ENCODE measurements at regions of chr3 and their contacts with region 1.

Region 1: GRCh38 chr3:97793420-97794019 is 28.3 kb upstream of the CRYBG3 start:
- DNase-seq: peak; percentile 42
- H3K4me3 ChIP-seq: no peak overlapping the region
- H3K27ac ChIP-seq: no peak overlapping the region
- H3K4me1 ChIP-seq: no peaks in the 10 kb centered on the region
- H3K27me3 ChIP-seq: no peaks in the 10 kb centered on the region
- CTCF ChIP-seq: peak; percentile 66 to 76

Region 2: DNA sequence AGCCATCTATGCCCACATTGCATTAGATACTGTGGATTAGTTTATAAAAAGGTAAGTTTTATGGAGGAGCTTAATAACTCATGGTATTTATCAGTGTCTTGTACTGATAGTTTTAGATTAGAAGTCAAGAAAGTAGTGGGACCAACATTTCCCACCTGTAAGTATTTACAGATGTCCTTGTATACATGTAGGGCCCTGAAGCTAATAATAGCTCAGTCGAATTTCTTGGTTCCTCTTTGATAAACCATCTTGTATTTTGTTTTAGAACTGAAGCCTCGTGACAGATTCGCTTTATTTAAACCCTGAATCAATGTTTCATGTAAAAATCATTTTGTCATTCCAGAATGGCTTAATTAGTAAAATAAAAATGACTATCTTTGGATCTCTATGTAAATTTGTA is 101.7 kb after region 1 on chr3:
- CTCF ChIA-PET with region 1: no interaction called
- dilution Hi-C with region 1: no loop called
- in situ Hi-C with region 1: no loop called
- intact Hi-C with region 1: loop called (anchors 1 kb)
- DNase-seq: no peak
- H3K4me3 ChIP-seq: no peak overlapping the region
- H3K27ac ChIP-seq: no peak overlapping the region
- H3K4me1 ChIP-seq: no peaks in the 10 kb centered on the region
- H3K27me3 ChIP-seq: no peaks in the 10 kb centered on the region
- CTCF ChIP-seq: no peak

Region 3: DNA sequence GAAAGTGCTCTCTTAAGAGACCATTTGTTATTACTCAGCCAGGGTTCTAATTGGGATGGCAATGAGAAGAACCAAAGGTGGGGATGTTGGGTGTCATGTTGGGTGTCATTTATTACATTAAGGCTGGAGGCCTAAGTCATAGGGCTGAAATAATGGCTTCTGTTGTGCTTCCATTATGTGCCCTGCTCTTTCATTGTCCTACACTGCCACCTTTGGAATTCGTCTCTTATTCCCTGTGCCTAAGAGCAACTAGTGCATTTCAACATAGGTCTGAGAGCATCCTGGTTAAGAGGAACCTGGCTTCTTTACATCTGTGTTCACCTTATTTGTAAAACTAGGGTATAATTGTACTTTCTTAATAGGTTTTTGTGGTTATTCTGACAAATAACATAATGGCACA is 146.5 kb after region 1 on chr3:
- CTCF ChIA-PET with region 1: no interaction called
- dilution Hi-C with region 1: no loop called
- in situ Hi-C with region 1: no loop called
- intact Hi-C with region 1: loop called (anchors 2 kb)
- DNase-seq: no peak
- H3K4me3 ChIP-seq: no peak overlapping the region
- H3K27ac ChIP-seq: no peak overlapping the region
- H3K4me1 ChIP-seq: no peaks in the 10 kb centered on the region
- H3K27me3 ChIP-seq: no peaks in the 10 kb centered on the region
- CTCF ChIP-seq: no peak

Region 4: DNA sequence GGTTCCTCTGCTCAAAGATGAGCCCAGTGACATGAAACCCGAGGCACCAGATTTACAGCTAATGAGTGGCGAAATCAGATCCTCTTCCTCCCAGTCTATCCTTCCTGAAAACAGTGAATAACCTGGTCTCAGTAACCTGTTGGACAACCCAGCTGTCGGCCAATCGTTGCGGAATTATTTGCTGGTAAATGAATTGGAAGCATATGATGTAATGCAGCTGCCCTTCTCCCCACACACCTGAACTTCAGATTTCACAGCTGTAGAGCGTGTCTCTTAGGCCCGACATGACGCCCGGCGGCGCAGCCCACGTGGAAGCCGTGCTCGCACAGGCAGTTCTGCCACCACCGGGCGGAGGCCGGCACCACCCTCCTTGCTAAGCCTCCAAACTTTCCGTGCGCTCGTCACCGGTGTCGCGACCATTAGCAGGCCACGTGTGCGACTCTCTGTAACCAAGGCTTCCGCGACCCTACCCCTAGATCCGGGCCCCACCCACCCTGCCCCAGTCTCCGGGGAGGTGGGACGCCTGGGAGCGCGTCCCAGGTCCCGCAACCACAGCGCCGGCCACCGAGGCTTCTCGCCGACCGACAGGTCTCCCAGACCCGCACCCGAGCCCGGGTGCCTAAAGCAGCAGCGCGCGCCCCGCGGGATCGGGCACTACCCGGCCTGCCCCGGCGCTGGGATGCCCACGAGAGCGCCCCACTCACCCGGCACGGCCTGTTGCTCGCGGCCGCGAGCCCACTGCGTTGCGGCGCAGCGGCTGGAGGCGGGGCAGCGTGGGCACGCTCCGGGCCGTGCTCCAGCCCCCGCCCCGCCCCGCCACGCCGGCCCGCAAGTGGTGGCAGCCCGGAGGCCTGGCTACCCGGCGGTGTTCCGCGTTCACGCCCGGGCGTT is 178.4 kb after region 1 on chr3 and contains the start of gene RIOX2:
- CTCF ChIA-PET with region 1: no interaction called
- dilution Hi-C with region 1: no loop called
- in situ Hi-C with region 1: no loop called
- intact Hi-C with region 1: loop called (anchors 5 kb)
- DNase-seq: peak; percentile 74
- H3K4me3 ChIP-seq: peak within 1 kb of the TSS; percentile 51 to 71 (median 67)
- H3K27ac ChIP-seq: peak within 1 kb of the TSS; percentile 46
- H3K4me1 ChIP-seq: peaks cover 10% of the 10 kb centered on the region
- H3K27me3 ChIP-seq: no peaks in the 10 kb centered on the region
- CTCF ChIP-seq: no peak
- total RNA-seq, gene RIOX2: 33.3 to 42.4 TPM

Region 5: DNA sequence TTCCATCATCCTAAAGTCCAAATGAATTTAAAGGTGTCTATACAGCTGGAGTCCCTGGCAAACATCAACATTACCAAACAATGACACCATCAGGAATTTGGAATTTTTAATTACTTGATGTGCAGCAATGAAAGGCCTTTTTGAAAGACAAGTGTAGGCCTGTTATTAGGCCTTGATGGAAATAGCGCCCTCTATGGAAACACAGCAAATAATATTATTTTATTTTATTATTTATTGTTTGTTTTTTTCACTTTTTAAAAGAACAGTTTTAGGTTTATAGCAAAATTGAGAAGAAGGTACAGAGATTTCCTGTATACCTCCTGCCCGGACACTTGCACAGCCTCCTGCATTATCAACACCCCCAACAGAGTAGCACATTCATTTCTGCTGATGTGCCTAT is 275.3 kb after region 1 on chr3:
- CTCF ChIA-PET with region 1: no interaction called
- dilution Hi-C with region 1: no loop called
- in situ Hi-C with region 1: no loop called
- intact Hi-C with region 1: no loop called
- DNase-seq: no peak
- H3K4me3 ChIP-seq: no peak overlapping the region
- H3K27ac ChIP-seq: no peak overlapping the region
- H3K4me1 ChIP-seq: no peaks in the 10 kb centered on the region
- H3K27me3 ChIP-seq: peaks cover 4% of the 10 kb centered on the region
- CTCF ChIP-seq: peak; percentile 21 to 34

Region 6: GRCh38 chr3:98329392-98330124 is 536.0 kb after region 1 on chr3:
- CTCF ChIA-PET with region 1: no interaction called
- dilution Hi-C with region 1: no loop called
- in situ Hi-C with region 1: loop called in 1 of 2 experiments (anchors 25 kb)
- intact Hi-C with region 1: no loop called
- DNase-seq: peak; percentile 38
- H3K4me3 ChIP-seq: no peak overlapping the region
- H3K27ac ChIP-seq: no peak overlapping the region
- H3K4me1 ChIP-seq: no peaks in the 10 kb centered on the region
- H3K27me3 ChIP-seq: no peaks in the 10 kb centered on the region
- CTCF ChIP-seq: peak; percentile 69 to 83

Measured in mammary epithelial cell (primary cell).